MCF 10A (cell line): ENCODE measurements at regions of chr6 and their contacts with region 1.

Region 1: GRCh38 chr6:134619789-134620188 is 301.9 kb upstream of the SGK1 start:
- DNase-seq: peak; percentile 53
- H3K4me3 Mint-ChIP-seq: no peak overlapping the region
- H3K27ac Mint-ChIP-seq: peak overlapping the region; percentile 57
- H3K4me1 Mint-ChIP-seq: peaks cover 52% of the 10 kb centered on the region
- H3K27me3 Mint-ChIP-seq: no peaks in the 10 kb centered on the region
- CTCF ChIP-seq: no peak

Region 2: DNA sequence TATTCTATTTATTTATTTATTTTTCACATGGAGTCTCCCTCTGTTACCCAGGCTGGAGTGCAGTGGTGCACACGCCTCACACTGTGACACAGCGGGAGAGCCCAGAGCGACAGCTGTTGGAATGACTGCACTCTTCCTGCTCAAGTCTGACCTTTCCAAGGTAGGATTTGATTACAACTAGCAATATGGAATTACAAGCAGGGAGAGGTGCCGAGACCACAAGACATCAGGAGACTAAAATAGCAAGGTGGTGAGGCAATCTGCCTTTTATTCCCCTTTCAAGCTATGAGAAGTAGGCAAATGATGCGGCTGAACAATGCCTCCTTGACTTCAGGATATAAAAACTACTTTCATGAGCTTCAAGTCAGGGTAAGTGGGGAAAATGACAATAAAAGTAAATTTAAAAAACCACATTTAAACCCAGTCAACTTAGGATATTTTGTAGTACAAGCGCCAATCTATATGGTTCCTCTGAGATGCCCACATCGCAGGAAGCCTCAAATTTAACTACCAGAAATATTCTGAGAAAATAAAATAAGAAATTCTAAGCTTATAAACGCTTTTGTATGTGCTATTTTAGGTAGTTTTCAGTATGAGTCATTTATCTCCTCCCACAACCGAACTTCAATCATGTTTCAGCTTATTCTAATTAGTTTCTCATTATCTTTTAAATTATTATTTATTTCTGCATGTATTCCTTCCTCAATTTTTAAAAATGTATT is 154.9 kb before region 1 on chr6:
- CTCF ChIA-PET with region 1: interaction called, 3 read pairs
- POLR2A ChIA-PET with region 1: interaction called, 10 read pairs
- intact Hi-C with region 1: no loop called
- DNase-seq: peak; percentile 76
- H3K4me3 Mint-ChIP-seq: no peak overlapping the region
- H3K27ac Mint-ChIP-seq: peak overlapping the region; percentile 55
- H3K4me1 Mint-ChIP-seq: peaks cover 36% of the 10 kb centered on the region
- H3K27me3 Mint-ChIP-seq: no peaks in the 10 kb centered on the region
- CTCF ChIP-seq: no peak

Region 3: DNA sequence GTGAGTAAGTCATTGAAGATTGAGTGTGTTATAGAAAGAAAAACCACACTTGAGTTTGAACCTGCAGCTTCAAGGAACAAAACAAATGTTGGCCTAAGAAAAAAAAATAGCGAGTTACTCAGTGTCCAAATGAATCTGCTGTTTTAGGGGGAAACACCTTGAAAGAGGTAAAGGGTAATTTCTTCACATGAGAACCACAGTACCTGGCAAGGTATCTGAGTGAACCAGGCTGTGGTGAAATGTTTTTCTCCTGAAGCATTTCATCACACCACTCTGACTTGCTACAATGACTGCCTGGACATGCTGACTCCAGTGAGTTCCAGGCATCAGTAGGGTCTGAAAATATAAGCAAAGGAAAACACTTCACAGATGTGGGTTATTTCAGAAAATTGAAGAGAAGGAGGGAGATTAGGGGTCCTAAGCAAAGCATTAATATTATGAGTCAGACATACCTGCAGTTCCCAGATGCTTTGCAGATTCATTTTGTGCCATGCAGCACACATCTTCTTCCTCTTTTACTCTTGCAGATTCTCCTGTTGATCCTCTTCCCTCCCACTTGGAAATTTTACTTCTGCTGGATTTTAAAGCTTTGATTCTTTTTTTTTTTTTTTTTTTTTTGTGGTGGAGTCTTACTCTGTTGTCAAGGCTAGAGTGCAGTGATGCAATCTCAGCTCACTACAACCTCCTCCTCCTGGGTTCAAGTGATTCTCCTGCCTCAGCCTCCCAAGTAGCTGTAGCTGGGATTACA is 95.7 kb before region 1 on chr6:
- CTCF ChIA-PET with region 1: interaction called, 4 read pairs
- POLR2A ChIA-PET with region 1: interaction called, 32 read pairs
- intact Hi-C with region 1: no loop called
- DNase-seq: peak; percentile 88
- H3K4me3 Mint-ChIP-seq: no peak overlapping the region
- H3K27ac Mint-ChIP-seq: peak overlapping the region; percentile 24
- H3K4me1 Mint-ChIP-seq: peaks cover 24% of the 10 kb centered on the region
- H3K27me3 Mint-ChIP-seq: no peaks in the 10 kb centered on the region
- CTCF ChIP-seq: no peak

Region 4: DNA sequence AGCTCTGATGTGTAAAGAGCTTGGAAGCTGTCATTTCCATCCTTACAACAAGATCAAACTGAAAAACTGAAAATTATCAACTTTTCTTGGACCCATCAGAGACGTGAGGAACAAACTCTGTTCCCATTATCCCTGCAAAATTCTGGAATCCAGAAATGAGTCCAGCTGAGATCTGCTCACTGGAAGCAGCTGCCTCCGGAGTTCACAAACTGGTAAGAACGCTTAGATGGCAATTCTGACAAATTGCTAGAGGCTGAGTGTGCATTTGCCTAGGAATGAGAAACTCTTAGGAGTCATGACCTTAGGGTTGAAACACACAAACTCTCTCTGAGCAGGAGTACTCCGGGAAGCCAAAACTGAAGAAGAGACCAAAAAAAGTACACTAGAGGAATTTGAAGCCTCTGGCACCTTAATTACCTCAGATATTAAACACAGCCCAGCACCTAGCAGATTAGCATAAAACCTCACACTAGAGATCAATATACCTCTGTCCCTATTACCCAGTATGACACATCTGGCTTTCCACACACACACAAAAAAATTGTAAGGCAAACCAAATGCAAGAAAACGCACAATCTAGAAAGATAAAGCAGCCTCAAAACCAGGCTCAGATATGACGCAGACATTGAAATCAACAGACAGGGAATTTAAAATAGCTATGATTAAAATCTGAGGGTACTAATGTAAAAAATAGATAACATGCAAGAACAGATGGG is 68.4 kb before region 1 on chr6:
- CTCF ChIA-PET with region 1: interaction called, 4 read pairs
- POLR2A ChIA-PET with region 1: interaction called, 21 read pairs
- intact Hi-C with region 1: no loop called
- DNase-seq: peak; percentile 39
- H3K4me3 Mint-ChIP-seq: peak overlapping the region; percentile 10
- H3K27ac Mint-ChIP-seq: peak overlapping the region; percentile 10
- H3K4me1 Mint-ChIP-seq: peaks cover 16% of the 10 kb centered on the region
- H3K27me3 Mint-ChIP-seq: no peaks in the 10 kb centered on the region
- CTCF ChIP-seq: no peak

Region 5: DNA sequence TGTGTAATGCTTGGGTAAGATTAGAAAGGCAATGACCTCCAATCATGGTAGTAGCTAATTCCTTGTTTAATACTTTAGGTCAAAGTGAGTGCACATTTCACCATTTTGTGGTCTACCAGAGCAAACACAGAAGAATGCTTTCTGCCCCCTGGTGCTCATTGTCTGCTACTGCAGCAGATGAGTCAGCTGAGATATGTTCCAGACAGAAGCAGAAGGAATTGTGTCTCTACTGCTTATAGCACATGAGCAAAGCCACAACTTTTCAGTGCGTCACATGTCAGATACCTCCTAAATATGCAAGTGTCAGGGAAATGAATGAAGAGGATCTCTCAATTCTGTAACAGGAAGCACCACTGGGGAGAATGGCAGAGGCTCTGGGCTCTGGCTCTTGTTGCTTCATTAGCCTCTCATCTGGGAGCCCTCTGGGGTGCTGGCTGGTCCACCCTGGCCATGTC is 21.2 kb after region 1 on chr6:
- CTCF ChIA-PET with region 1: interaction called, 46 read pairs
- POLR2A ChIA-PET with region 1: interaction called, 90 read pairs
- intact Hi-C with region 1: no loop called
- DNase-seq: peak; percentile 95
- H3K4me3 Mint-ChIP-seq: no peak overlapping the region
- H3K27ac Mint-ChIP-seq: peak overlapping the region; percentile 81
- H3K4me1 Mint-ChIP-seq: peaks cover 25% of the 10 kb centered on the region
- H3K27me3 Mint-ChIP-seq: no peaks in the 10 kb centered on the region
- CTCF ChIP-seq: peak; percentile 79

Region 6: GRCh38 chr6:135033238-135033637 is 413.4 kb after region 1 on chr6:
- CTCF ChIA-PET with region 1: no interaction called
- POLR2A ChIA-PET with region 1: no interaction called
- intact Hi-C with region 1: no loop called
- DNase-seq: no peak
- H3K4me3 Mint-ChIP-seq: no peak overlapping the region
- H3K27ac Mint-ChIP-seq: no peak overlapping the region
- H3K4me1 Mint-ChIP-seq: peaks cover 11% of the 10 kb centered on the region
- H3K27me3 Mint-ChIP-seq: no peaks in the 10 kb centered on the region
- CTCF ChIP-seq: no peak